ENCODE measurements at regions of chr10 and their contacts with region 1.

Region 1: GRCh38 chr10:132359305-132360040 is 27.5 kb downstream of the LRRC27 start:
- DNase-seq: peak in 1 of 2 donors; percentile 58
- H3K4me3 ChIP-seq: no peak overlapping the region
- H3K27ac ChIP-seq: no peak overlapping the region
- H3K4me1 ChIP-seq: no peaks in the 10 kb centered on the region
- H3K27me3 ChIP-seq: no peaks in the 10 kb centered on the region
- CTCF ChIP-seq: no peak

Region 2: GRCh38 chr10:132223156-132223590 is 136.3 kb before region 1 on chr10:
- intact Hi-C with region 1: loop called (anchors 2 kb)
- DNase-seq: peak; percentile 70 to 82
- H3K4me3 ChIP-seq: no peak overlapping the region
- H3K27ac ChIP-seq: no peak overlapping the region
- H3K4me1 ChIP-seq: no peaks in the 10 kb centered on the region
- H3K27me3 ChIP-seq: peaks cover 0 to 3% of the 10 kb centered on the region in 2 donors
- CTCF ChIP-seq: peak; percentile 77 to 85

Region 3: DNA sequence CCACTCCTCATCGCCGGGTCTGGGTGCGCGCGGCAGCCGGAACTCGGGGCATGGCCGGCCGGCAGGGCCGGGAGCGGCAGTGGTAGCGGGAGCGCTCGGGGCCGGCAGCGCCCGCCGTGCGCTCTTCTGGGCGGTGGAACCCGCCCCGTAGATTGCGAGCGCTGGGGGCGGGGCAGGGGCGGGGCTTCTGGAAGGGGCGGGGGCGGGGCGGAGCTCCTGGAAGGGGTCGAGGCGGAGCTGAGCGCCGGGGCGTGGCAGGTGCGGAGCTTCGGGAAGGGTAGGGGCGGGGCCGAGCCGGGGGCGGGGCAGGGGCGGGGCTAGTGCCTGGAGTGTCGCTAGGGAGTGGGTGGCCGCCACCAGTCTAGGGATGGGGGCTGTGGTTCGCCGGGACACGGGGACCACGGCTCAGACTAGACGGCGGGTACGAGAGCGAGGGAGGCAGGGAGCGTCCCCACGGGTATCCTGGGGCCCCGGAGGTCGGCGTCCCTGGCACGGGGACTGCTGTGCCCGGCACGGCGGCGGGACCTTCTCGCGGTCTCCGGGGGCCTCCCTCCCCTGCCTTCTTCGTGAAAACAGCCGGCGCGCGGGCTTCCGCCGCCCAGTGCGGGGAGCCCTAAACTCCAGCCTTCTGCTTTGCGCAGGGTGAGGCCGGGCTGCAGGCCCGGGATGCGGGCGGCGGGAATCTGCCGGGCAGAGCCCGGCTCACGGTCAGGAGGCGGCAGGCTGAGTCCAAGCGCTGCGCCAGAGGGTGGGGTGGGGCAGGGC is 51.5 kb before region 1 on chr10 and contains the start of gene STK32C:
- intact Hi-C with region 1: loop called (anchors 10 kb)
- DNase-seq: peak; percentile 89 to 93
- H3K4me3 ChIP-seq: peak within 1 kb of the TSS; percentile 66 to 82
- H3K27ac ChIP-seq: peak within 1 kb of the TSS; percentile 80 to 89
- H3K4me1 ChIP-seq: peaks cover 0 to 19% (median 15%) of the 10 kb centered on the region in 4 donors
- H3K27me3 ChIP-seq: peaks cover 0 to 21% of the 10 kb centered on the region in 2 donors
- CTCF ChIP-seq: no peak